ENCODE measurements at regions of chr3 and their contacts with region 1.

Region 1: GRCh38 chr3:98980915-98981596 is 79.6 kb upstream of the DCBLD2 start:
- DNase-seq: no peak
- ATAC-seq: no peak

Region 2: GRCh38 chr3:98824256-98824655 is 156.8 kb before region 1 on chr3:
- intact Hi-C with region 1: loop called in 1 of 2 experiments (anchors 10 kb)
- DNase-seq: no peak
- ATAC-seq: no peak

Region 3: GRCh38 chr3:99031778-99032177 is 50.7 kb after region 1 on chr3:
- intact Hi-C with region 1: no loop called
- DNase-seq: no peak
- ATAC-seq: no peak

Region 4: GRCh38 chr3:99256788-99257187 is 275.7 kb after region 1 on chr3:
- intact Hi-C with region 1: no loop called
- DNase-seq: no peak
- ATAC-seq: no peak

Measured in left colon (tissue), 2 donors.